HEK293 (cell line): ENCODE measurements at regions of chr17 and their contacts with region 1.

Region 1: DNA sequence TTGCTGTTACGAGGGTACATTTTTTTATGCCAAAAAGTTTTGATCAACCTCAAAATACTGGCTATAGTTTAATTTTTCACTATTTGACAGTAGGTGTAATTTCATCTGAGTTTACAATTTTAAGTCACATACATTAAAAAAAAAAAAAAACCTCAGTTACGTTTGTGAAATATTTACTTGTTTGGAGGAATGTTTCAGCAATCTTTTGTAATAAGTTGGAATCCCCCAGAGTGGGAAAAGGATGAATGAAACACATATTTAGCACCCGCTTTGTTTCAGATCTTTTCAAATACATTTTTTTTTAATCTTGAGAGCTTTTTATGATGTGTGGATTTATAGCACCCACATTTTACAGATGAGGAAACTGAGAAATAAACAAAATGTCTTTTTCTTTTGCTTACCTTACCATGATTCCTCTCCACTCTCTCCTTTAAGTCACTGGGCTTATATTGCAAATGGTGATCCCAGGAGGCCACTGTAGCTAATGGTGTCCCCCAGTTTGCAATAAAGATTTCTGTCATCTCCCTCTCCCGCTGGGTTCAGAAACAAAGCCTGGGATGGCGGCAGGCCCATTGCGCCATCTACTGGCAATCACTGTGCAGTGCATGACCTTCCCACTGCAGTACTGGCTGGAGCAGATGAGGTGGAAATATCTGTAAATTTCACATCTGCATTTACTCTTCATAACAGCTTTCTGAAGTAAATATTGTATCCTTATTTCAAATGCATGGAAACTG is 27.7 kb downstream of the TBC1D3B start:
- H3K4me3 ChIP-seq: no peak overlapping the region
- H3K27ac ChIP-seq: no peak overlapping the region
- H3K4me1 ChIP-seq: no peaks in the 10 kb centered on the region
- CTCF ChIP-seq: peak; percentile 99

Region 2: DNA sequence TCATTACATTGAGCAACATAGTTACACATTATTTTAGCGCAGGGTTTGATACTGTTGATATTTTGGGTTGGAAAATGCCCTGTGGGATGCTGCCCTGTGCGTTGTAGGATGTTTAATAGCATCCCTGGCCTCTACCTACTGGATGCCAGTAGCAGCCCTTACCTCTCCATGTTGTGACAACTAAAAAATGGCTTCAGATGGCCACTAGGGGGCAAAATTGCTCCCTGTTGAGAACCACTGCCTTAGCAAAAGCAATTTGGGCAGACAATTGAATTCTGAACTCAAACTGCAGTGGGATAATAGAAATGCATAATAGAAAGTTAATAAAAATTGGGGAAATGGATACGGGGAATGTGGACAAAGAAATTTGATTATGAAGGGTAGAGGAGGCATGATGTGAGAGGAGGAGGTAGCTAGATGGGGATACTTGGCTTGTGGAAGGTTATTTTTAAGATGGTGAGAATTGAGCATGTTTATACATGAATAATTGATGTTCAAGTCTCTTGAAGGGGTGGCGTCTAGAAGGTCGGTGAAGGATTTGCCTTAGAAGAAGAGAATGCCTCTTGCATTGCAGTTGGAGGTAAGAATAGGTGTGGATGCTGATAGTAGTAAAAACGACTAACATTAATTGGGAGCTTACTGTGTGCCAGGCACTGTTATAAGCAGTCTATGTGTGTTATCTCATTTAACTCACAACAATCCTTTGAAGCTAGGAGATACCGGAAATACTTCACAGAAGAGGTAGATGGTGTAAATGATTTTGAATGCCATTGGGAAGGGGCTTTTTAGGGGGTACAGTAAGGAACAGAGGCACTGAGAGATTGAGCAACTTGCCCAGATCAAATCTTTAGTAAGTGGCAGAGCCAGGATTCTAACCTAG is 299.0 kb before region 1 on chr17:
- CTCF ChIA-PET with region 1: interaction called, 14 read pairs
- POLR2A ChIA-PET with region 1: no interaction called
- H3K4me3 ChIP-seq: no peak overlapping the region
- H3K27ac ChIP-seq: no peak overlapping the region
- H3K4me1 ChIP-seq: no peaks in the 10 kb centered on the region
- CTCF ChIP-seq: peak; percentile 76

Region 3: DNA sequence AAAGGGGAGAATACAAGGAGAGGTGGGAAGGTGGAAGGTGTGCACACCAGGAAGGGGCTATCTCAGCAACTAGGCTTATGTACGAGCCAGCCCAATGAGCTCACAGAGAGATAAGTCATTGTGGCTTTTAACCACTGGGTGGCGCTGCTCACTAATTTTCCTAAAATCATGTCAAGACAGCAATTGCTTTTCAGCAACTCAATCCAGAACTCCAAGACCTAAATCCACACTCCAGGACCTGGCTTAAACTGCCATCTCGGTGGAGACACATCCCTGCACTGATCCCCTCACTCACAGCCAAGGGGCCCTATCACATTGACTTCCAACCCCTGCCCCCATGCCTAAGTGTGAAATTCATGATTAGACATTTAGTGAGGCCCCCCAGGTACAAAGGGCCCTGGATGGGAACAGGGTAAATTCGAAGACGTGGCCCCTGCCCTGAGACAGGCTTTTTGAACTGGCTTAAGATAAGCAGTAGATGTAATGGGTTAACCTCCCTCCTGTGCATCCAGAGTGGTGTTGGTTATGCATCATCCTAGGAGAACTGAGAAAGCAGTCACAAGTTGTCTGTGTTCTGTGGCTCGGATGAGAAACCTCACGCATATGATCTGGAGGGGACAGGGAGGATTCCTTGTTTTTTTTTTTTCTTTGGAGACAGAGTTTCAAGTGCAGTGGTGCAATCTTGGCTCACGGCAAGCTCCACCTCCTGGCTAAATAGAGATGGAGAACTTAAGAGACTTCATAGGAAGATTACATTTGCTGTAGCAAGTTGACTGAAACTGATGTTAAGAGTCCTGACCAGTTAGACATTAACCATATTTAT is 179.0 kb before region 1 on chr17:
- CTCF ChIA-PET with region 1: interaction called, 330 read pairs
- POLR2A ChIA-PET with region 1: interaction called, 5 read pairs
- H3K4me3 ChIP-seq: no peak overlapping the region
- H3K27ac ChIP-seq: no peak overlapping the region
- H3K4me1 ChIP-seq: no peaks in the 10 kb centered on the region
- CTCF ChIP-seq: peak; percentile 69

Region 4: GRCh38 chr17:36027761-36028160 is 121.0 kb before region 1 on chr17:
- CTCF ChIA-PET with region 1: interaction called, 12 read pairs
- POLR2A ChIA-PET with region 1: no interaction called
- H3K4me3 ChIP-seq: no peak overlapping the region
- H3K27ac ChIP-seq: no peak overlapping the region
- H3K4me1 ChIP-seq: no peaks in the 10 kb centered on the region
- CTCF ChIP-seq: no peak

Region 5: DNA sequence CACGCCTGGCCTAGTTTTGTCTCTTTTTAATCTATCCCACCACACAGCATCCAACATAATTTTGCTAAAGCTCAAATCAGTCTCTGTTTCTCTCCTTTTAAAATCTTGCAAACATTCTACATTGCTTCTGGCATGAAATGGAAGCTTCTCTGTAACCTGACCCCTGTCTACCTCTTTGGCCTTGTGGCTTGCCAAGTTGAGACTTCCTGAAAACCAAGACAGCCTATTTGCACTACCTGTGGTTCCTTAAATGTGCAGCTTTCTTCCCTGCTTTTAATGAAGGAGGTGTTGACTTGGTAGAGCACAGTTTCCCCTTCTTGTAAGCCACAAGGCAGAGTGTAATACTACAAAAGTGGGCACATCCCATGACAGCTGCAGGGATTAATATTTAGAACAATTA is 52.7 kb before region 1 on chr17:
- CTCF ChIA-PET with region 1: interaction called, 11 read pairs
- POLR2A ChIA-PET with region 1: no interaction called
- H3K4me3 ChIP-seq: no peak overlapping the region
- H3K27ac ChIP-seq: no peak overlapping the region
- H3K4me1 ChIP-seq: no peaks in the 10 kb centered on the region
- CTCF ChIP-seq: no peak

Region 6: DNA sequence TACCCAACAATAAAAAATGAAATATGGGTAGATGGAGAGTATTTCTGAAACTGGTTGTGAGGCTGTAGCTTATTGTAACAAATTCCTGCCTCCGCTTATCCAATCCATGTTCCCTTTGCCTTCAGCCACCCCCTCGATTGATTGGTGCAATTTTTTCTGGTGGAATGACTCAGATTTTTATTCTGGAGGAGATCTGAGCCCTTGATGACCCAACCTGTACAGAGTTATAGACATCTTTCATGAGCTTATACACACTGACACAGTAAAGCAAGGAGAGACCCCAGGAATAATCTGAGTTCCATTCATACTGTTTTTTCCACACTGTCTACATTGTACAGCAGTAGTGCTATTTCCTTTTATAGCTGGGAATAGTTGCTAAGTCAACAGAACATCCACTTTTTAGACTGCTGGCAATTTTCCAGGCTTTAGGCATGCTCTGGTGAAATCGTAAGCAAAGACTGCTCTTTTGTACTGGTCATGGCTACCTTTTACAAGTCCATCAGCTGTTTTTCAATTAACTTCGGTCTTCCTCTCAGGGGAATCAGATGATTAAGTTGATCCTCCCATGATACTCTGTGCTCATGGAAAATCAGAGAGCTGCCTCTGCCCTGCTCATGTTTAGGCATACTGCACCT is 15.0 kb before region 1 on chr17:
- CTCF ChIA-PET with region 1: interaction called, 319 read pairs
- POLR2A ChIA-PET with region 1: no interaction called
- H3K4me3 ChIP-seq: no peak overlapping the region
- H3K27ac ChIP-seq: no peak overlapping the region
- H3K4me1 ChIP-seq: peaks cover 9% of the 10 kb centered on the region
- CTCF ChIP-seq: no peak